Dorsolateral prefrontal cortex (tissue), 120 donors: ENCODE measurements at regions of chr10 and their contacts with region 1.

Region 1: DNA sequence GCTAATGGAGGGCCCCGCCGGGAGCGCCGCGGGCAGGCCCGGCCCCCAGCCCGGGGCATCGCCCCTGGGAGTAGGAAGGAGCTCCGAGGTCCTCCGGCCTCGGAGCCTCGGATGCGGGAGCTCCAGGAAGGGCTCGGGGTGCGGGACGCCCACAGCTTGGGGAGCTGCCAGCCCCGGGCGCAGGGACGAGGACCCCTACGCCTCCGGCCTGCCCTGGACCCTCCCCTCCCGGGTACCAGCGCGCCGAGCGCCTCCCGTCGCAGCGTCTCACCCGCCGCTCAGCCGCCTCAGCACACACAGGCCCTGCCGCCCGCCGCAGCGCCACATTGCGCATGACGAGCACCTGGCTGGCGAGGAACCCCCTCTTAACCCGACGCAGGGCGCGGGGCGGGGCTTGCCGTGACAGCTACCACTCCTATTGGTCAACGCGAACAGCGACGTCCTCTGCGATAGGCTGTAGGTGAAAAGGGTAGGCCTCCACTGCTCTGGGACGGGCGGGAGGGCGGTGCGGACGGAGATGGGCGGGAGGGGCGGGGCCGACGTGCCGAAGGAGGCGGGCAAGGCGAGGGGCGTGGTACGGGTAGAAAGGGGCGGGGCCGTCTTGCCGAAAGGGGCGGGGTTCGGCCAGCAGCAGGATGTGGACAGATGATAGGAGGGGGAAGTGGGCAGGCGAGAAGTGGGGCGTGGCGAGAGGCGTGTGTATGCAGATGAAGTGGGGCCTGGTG is at the start of gene PITRM1:
- DNase-seq: peak; percentile 96 to 99 (median 98)
- H3K4me3 ChIP-seq: peak within 1 kb of the TSS; percentile 65 to 100 (median 94)
- H3K27ac ChIP-seq: peak within 1 kb of the TSS in 56 of 59 donors; percentile 10 to 94 (median 80)
- H3K27me3 ChIP-seq: no peaks in the 10 kb centered on the region
- CTCF ChIP-seq: peak in 13 of 56 donors; percentile 7 to 44 (median 21)
- total RNA-seq, gene PITRM1: 72.5 to 149 (median 112) TPM

Region 2: GRCh38 chr10:3107426-3107961 is 65.1 kb before region 1 on chr10:
- intact Hi-C with region 1: loop called in 1 of 2 experiments (anchors 5 kb)
- DNase-seq: peak; percentile 40 to 87 (median 79)
- H3K4me3 ChIP-seq: peak overlapping the region in 52 of 59 donors; percentile 5 to 61 (median 35)
- H3K27ac ChIP-seq: peak overlapping the region in 55 of 59 donors; percentile 1 to 90 (median 72)
- H3K27me3 ChIP-seq: no peaks in the 10 kb centered on the region
- CTCF ChIP-seq: peak in 6 of 56 donors; percentile 8 to 22 (median 16)